K562 (cell line): ENCODE measurements at regions of chr19 and their contacts with region 1.

Region 1: DNA sequence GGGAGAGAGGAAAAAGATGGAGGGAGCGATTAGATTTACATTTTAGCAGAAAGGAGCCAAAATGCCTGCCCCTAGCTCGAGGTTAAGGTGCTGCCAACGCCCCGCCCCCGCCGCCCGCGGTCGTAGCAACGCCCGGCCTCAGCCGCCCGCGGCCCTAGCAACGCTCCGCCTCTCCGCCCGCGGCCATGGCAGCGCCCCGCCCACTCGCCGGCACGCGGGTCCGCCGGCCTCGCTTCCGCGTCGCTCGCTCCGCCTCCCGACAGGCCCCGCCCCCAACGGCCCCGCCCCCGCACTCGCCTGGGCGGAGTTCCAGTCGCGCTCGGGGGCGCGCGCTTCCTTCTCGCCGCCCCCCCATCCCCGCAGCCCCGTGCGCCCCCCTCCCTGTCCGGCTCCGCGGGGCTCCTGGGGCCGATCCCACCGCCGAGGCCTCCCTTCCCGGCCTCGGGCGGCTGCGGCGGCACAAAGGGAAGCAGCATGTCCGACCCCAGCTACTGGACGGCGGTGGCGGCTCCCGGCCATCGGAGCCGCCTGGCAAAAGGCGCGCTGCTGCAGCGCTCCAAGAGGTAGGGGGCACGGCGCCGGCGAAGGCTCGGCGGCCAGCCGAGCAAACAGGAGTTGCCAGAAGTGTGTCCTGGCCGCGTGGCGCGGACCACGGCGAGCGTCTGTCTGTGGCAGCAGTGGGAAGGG is 20.3 kb downstream of the MAST3 start:
- DNase-seq: peak; percentile 93 to 99 (median 98)
- ATAC-seq: peak; percentile 94
- H3K4me3 ChIP-seq: peak overlapping the region; percentile 82
- H3K27ac ChIP-seq: peak overlapping the region; percentile 76
- H3K4me1 ChIP-seq: peaks cover 13 to 25% of the 10 kb centered on the region in 2 experiments; a peak in 4 of 5 replicates
- H3K27me3 ChIP-seq: no peaks in the 10 kb centered on the region
- CTCF ChIP-seq: 0 out of 6 replicates have a peak, but pooled peaks of 1 of the 3 experiments have one; percentile 1
- EP300 ChIP-seq: no peak
- POLR2A ChIP-seq: peak; percentile 35; the same call in 1 of the 2 replicates
- RAD21 ChIP-seq: no peak

Region 2: DNA sequence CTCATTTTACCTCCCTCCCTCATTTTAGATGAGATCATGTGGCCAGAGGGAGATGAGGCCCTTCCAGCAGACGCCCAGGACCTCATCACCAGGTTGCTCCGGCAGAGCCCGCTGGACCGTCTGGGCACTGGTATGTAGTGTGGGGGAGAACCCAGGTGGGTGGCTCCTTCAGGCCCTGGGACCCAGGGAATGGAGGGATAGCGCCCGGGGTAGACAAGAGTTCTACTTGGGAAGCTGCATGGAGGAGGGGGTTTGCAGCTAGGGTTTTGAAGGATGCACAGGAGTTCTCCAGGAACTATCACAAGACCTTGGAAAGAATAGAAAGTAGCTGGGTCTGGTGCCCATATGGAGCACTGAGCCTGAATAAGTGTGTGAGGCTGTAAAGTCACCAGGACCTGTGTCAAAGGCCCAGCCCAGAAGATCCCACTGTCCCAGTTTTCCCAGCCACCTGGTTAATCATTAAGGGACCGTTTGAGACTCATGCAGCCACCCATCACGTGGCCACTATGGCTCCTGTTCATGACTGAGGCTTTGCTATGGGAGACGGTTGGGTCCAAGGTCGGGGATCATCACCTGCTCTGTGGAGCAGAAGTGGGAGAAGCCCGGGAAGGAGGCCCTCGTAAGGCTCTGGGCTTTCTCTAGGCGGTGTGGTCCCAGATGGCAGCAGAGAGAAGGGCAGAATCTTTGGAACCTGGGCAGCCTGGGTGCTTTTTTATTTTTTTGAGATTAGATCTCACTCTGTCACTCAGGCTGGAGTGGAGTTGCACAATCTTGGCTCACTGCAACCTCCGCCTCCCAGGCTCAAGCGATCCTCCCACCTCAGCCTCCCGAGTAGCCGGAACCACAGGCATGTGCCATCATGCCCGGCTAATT is 18.1 kb after region 1 on chr19:
- CTCF ChIA-PET with region 1: no interaction called
- POLR2A ChIA-PET with region 1: no interaction called
- in situ Hi-C with region 1: no loop called
- intact Hi-C with region 1: no loop called
- DNase-seq: no peak
- ATAC-seq: no peak
- H3K4me3 ChIP-seq: no peak overlapping the region
- H3K27ac ChIP-seq: no peak overlapping the region
- H3K4me1 ChIP-seq: peaks cover 0 to 4% of the 10 kb centered on the region in 2 experiments; a peak in 2 of 5 replicates
- H3K27me3 ChIP-seq: no peaks in the 10 kb centered on the region
- CTCF ChIP-seq: no peak
- EP300 ChIP-seq: no peak
- POLR2A ChIP-seq: no peak
- RAD21 ChIP-seq: no peak

Region 3: DNA sequence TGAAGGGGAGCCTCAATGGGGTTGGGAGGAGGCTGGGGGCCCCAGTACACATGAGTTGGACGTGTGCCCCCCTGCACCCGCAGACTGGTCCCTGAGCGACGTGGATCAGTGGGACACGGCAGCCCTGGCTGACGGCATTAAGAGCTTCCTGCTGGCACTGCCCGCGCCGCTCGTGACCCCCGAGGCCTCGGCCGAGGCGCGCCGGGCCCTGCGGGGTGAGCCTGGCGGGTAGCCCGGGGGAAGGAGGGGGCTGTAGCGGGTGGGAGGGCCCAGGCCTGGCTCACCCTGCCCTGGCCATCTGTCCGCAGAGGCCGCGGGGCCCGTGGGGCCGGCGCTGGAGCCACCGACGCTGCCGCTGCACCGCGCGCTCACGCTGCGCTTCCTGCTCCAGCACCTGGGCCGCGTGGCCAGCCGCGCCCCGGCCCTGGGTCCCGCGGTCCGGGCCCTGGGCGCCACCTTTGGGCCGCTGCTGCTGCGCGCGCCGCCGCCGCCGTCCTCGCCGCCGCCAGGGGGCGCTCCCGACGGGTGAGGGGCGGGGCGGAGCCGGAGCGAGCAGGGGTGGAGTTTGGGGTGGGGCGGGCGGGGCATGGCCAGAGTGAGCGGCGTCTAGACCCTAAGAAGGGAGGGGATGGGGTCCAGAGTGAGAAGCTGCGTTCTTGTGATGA is 43.3 kb after region 1 on chr19:
- CTCF ChIA-PET with region 1: interaction called, 12 read pairs
- POLR2A ChIA-PET with region 1: interaction called, 3 read pairs
- in situ Hi-C with region 1: no loop called
- intact Hi-C with region 1: loop called (anchors 1 kb)
- DNase-seq: peak; percentile 85 to 95 (median 95)
- ATAC-seq: peak; percentile 85
- H3K4me3 ChIP-seq: peak overlapping the region; percentile 40
- H3K27ac ChIP-seq: peak overlapping the region; percentile 84
- H3K4me1 ChIP-seq: peaks cover 32 to 50% of the 10 kb centered on the region in 2 experiments
- H3K27me3 ChIP-seq: no peaks in the 10 kb centered on the region
- CTCF ChIP-seq: peak; percentile 15 to 96 (median 88); a peak in 4 of 6 replicates
- EP300 ChIP-seq: no peak
- POLR2A ChIP-seq: no peak; the same call in none of the 2 replicates
- RAD21 ChIP-seq: peak in 1 of 2 experiments; percentile 65; a peak in 2 of 4 replicates

Region 4: GRCh38 chr19:18167975-18168645 is 50.3 kb after region 1 on chr19:
- CTCF ChIA-PET with region 1: interaction called, 13 read pairs
- POLR2A ChIA-PET with region 1: interaction called, 3 read pairs
- in situ Hi-C with region 1: no loop called
- intact Hi-C with region 1: loop called (anchors 1 kb)
- DNase-seq: peak; percentile 67 to 84 (median 80)
- ATAC-seq: peak; percentile 94
- H3K4me3 ChIP-seq: no peak overlapping the region
- H3K27ac ChIP-seq: no peak overlapping the region
- H3K4me1 ChIP-seq: peaks cover 4 to 13% of the 10 kb centered on the region in 2 experiments; a peak in 4 of 5 replicates
- H3K27me3 ChIP-seq: no peaks in the 10 kb centered on the region
- CTCF ChIP-seq: peak; percentile 84 to 87 (median 85)
- EP300 ChIP-seq: no peak
- POLR2A ChIP-seq: no peak
- RAD21 ChIP-seq: peak; percentile 41 to 71